ENCODE measurements at regions of chr3 and their contacts with region 1.

Region 1: DNA sequence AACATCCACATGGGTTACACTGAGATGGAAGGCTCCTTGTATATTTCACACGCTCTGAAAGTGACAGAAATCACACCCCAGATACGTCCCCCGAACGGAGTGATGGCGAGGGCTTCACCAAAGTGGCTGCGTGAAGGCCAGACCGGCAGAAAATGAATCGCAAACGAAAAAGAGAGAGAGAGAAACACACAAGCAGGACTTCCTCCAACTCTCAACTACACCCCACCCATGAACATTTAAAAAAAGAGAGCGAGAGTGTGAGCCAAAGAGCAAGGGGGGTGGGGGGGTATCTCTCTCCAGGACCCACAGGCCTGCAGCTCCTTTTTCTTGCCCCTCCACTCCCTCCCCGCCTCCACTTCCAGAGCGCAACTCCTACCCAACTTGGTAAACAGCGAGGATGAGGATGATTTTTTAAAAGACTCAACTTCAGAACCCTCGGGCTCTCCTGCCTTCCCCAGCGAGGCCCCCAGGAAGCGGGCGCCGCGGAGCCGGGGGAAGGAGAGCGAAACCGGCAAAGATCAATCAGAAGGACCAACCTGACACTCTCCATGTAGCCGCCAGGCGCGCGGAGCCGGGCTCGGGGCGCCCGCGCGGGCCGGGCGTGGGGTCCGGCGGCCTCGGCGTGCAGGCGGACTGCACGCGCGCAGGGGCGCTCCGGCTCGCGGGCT is 519.1 kb downstream of the FOXP1 start:
- DNase-seq: no peak
- H3K4me3 ChIP-seq: peak overlapping the region; percentile 78 to 79
- H3K27ac ChIP-seq: peak overlapping the region; percentile 99
- H3K4me1 ChIP-seq: peaks cover 67% of the 10 kb centered on the region
- H3K27me3 ChIP-seq: no peaks in the 10 kb centered on the region
- CTCF ChIP-seq: no peak
- POLR2A ChIP-seq: no peak

Region 2: DNA sequence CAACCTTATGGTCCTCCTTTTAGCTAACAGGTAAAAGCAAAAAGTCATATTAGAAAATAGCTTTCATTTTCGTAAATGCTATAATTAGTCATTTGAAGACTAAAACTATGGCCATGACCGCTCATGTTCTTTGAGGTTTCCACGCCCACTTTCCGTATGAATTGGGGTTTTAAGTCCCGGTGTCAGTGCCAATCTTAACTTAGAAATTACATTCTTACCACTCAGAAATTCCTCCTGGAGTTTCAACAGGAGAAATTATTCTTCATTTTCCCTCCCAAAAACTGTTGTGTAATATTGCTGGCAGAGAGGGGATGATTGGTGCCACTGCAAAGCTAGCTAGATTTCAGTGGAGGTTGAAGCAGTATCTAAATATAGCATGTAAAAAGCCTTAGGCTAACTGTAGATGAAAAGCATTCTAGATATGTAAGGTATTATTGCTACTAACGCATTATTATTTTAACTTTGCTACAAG is 681.0 kb before region 1 on chr3:
- intact Hi-C with region 1: no loop called
- DNase-seq: no peak
- H3K4me3 ChIP-seq: no peak overlapping the region
- H3K27ac ChIP-seq: no peak overlapping the region
- H3K4me1 ChIP-seq: no peaks in the 10 kb centered on the region
- H3K27me3 ChIP-seq: no peaks in the 10 kb centered on the region
- CTCF ChIP-seq: no peak
- POLR2A ChIP-seq: no peak

Region 3: GRCh38 chr3:70753597-70753996 is 310.8 kb before region 1 on chr3:
- intact Hi-C with region 1: no loop called
- DNase-seq: no peak
- H3K4me3 ChIP-seq: no peak overlapping the region
- H3K27ac ChIP-seq: no peak overlapping the region
- H3K4me1 ChIP-seq: no peaks in the 10 kb centered on the region
- H3K27me3 ChIP-seq: no peaks in the 10 kb centered on the region
- CTCF ChIP-seq: no peak
- POLR2A ChIP-seq: no peak

Region 4: DNA sequence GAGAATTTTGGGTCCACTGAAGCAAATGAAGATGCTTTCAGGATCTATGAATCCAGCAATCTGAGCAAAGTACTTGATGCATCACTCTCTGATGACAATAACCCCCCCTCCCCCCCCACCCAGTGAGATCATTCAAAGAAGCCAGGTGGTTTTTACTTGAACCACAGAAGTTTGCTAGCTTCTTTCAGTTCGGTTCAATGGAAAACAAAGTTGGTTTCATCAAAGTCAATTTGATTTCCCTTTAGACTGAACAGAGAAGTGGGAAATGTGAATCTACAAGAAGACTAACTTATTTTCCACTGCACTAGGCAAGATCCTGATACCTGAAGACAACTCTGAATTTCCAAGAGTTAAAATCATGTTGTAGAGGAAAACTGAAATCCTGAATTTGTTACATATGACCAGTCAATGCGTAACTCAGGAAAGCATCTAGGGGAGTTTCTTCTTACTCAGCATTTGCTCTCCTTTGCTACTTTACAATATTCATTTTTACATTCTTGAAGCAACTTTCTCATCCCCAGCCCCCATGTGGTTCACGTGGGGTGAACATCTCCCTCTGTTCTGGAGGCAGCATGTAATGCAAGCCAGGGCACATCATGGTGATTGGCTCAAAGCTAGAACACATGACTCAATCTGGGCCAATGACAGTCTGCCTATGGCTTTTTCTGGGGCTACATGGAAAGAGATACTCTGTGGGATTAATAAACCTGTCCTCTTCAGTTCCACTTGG is 53.5 kb before region 1 on chr3:
- intact Hi-C with region 1: loop called (anchors 10 kb)
- DNase-seq: no peak
- H3K4me3 ChIP-seq: no peak overlapping the region
- H3K27ac ChIP-seq: no peak overlapping the region
- H3K4me1 ChIP-seq: peaks cover 44% of the 10 kb centered on the region
- H3K27me3 ChIP-seq: no peaks in the 10 kb centered on the region
- CTCF ChIP-seq: no peak
- POLR2A ChIP-seq: no peak

Region 5: DNA sequence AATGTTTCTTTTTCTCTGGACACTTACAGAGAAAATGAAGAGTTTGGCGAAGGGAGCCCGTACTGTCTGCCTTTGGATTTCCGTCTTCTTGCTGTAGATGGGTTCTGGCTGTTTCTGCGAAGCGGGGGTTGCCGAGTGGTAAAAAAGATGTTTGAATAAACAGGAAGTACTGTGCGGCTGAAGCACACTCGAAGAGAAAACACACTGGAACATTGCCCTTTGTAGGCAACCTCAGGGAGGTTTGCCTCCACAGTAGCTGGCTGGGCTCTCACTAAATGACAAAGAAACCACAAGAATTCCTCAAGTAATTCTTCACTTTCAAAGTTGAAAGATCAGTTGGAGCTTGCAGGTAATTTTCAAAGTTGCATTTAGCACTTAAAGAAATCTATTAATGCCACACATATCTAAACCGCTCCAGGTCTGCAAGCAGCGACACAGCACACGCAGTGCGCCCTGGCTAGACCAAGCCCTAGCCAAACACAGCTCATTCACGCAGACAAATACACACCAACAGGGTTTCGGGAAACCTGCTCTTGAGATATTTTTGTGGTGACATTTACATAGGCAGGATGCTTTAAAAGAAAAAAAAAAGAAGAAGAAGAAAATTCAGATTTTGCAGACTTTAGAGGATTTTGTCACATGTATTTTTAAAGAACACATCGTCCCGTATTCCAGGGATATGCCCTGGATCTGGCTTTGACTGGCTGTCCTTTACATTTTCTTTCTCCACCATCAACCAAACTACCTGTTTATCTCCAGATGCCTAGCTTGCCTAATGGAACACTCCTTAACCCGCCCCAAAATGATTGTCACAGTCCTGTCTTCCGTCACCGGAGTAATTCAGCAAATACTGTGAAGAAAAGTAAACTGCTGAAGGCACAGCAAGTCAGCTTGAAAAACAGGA is 66.3 kb after region 1 on chr3:
- intact Hi-C with region 1: loop called (anchors 10 kb)
- DNase-seq: no peak
- H3K4me3 ChIP-seq: peak overlapping the region; percentile 43 to 55
- H3K27ac ChIP-seq: peak overlapping the region; percentile 91
- H3K4me1 ChIP-seq: peaks cover 55% of the 10 kb centered on the region
- H3K27me3 ChIP-seq: no peaks in the 10 kb centered on the region
- CTCF ChIP-seq: peak in 1 of 3 experiments; percentile 19
- POLR2A ChIP-seq: peak in 1 of 2 donors; percentile 41

Region 6: GRCh38 chr3:71168880-71169411 is 104.5 kb after region 1 on chr3:
- intact Hi-C with region 1: no loop called
- DNase-seq: no peak
- H3K4me3 ChIP-seq: no peak overlapping the region
- H3K27ac ChIP-seq: no peak overlapping the region
- H3K4me1 ChIP-seq: no peaks in the 10 kb centered on the region
- H3K27me3 ChIP-seq: no peaks in the 10 kb centered on the region
- CTCF ChIP-seq: no peak
- POLR2A ChIP-seq: no peak

Region 7: GRCh38 chr3:71583566-71584449 is 519.4 kb after region 1 on chr3 and contains the start of gene FOXP1:
- intact Hi-C with region 1: loop called (anchors 5 kb)
- DNase-seq: no peak
- H3K4me3 ChIP-seq: peak within 1 kb of the TSS; percentile 78 to 84
- H3K27ac ChIP-seq: peak within 1 kb of the TSS; percentile 98
- H3K4me1 ChIP-seq: peaks cover 22% of the 10 kb centered on the region
- H3K27me3 ChIP-seq: no peaks in the 10 kb centered on the region
- CTCF ChIP-seq: no peak
- POLR2A ChIP-seq: no peak
- total RNA-seq, gene FOXP1: 128 TPM

Measured in vagina (tissue), 2 donors.